ENCODE measurements at regions of chr12 and their contacts with region 1.

Region 1: DNA sequence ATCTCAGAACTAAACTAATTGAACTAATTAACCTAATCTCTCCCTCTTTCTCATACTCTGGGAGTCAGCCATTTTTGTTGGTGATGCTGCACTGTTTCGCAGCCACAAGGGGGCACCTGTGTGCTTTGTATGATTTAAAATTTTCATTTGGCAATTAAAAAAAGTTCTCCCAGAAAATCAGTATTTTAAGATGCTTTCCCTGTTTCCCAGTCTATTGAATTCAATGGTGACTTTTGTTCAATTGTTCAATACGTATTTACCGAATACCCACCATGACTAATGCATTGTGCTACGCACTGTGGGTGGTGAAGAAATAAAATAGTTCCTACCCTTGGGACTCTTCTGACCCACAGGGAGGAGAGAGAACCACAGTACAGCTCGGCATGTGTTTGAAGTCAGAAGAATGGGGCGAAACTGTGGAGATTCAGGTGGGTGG is 63.7 kb downstream of the ZNF664 start:
- DNase-seq: peak; percentile 39
- H3K4me3 Mint-ChIP-seq: no peak overlapping the region
- H3K27ac Mint-ChIP-seq: no peak overlapping the region
- H3K4me1 Mint-ChIP-seq: no peaks in the 10 kb centered on the region
- H3K27me3 Mint-ChIP-seq: peaks cover 13% of the 10 kb centered on the region

Region 2: DNA sequence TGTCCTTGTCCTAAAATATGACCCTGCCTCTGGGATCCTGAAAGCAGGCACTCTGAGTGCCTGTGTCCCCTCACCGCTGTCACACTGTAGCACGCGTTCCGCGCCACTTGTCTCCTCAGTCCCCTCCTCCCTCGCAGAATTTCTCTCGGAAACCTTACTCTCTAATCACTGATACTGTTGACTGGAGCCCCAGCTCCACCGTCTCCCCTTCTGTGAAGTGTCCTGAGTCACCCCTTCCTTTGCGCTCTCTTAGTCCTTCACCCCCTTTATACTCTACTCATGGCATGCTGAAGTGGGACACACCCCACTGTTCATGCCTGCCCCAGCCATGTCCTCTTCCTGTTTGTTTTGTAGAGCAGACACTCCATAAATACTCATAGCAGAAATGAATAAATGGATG is 41.0 kb after region 1 on chr12:
- CTCF ChIA-PET with region 1: no interaction called
- POLR2A ChIA-PET with region 1: no interaction called
- DNase-seq: no peak
- H3K4me3 Mint-ChIP-seq: no peak overlapping the region
- H3K27ac Mint-ChIP-seq: no peak overlapping the region
- H3K4me1 Mint-ChIP-seq: peaks cover 7% of the 10 kb centered on the region
- H3K27me3 Mint-ChIP-seq: peaks cover 10% of the 10 kb centered on the region

Region 3: GRCh38 chr12:124109751-124110150 is 73.1 kb after region 1 on chr12:
- CTCF ChIA-PET with region 1: no interaction called
- POLR2A ChIA-PET with region 1: no interaction called
- DNase-seq: peak; percentile 20
- H3K4me3 Mint-ChIP-seq: no peak overlapping the region
- H3K27ac Mint-ChIP-seq: no peak overlapping the region
- H3K4me1 Mint-ChIP-seq: no peaks in the 10 kb centered on the region
- H3K27me3 Mint-ChIP-seq: peaks cover 4% of the 10 kb centered on the region

Region 4: GRCh38 chr12:124767066-124767821 is 730.6 kb after region 1 on chr12:
- CTCF ChIA-PET with region 1: interaction called, 16 read pairs
- POLR2A ChIA-PET with region 1: no interaction called
- DNase-seq: peak; percentile 83
- H3K4me3 Mint-ChIP-seq: no peak overlapping the region
- H3K27ac Mint-ChIP-seq: no peak overlapping the region
- H3K4me1 Mint-ChIP-seq: peaks cover 9% of the 10 kb centered on the region
- H3K27me3 Mint-ChIP-seq: peaks cover 36% of the 10 kb centered on the region